ENCODE measurements at regions of chr10 and their contacts with region 1.

Region 1: GRCh38 chr10:102001435-102002068 is 54.4 kb downstream of the ARMH3 start:
- DNase-seq: peak; percentile 63
- CTCF ChIP-seq: no peak

Region 2: DNA sequence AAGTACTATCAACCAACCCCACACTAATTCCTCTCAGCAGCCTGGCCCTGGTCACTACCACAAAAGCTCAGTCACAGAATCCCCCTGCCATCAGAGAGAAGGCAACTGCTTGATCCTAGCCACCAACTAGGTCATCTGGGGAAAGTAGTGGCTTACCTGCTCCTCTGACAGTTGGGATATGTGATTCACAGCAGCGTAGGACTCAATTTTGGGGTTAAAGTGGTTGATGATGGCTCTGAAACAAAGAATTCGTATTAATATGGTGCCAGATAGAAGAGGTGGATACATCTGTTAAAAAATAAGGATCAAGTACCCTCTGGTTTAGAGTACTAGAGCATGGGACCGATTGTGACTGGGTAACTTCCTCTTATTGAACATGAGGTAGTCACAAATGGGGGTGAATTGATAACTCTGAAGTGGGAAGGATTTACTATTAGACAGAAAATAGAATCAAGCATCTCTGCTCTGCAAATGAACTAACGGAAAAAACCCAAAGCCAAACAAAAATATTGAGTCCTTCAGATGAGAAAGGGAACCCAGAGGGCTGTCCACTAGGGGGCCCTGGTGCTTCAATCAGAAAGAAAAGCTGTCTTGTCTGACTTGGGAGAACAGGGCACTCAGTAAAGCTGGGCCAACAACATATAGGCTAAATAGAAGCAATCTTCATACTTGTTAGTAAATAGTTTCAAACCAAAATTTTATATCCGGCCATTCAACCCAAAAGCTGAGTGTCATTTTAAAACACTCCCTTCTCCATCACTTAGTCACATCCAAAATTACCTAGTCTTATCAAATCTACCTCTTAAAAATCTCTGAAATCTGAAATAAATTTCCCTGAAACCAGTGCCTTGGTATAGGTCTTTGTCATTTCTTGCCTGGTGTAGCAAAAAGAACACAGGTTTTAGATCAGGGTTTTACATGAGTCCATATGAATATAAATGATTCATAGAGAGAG is 112.0 kb before region 1 on chr10:
- in situ Hi-C with region 1: loop called (anchors 5 kb)
- DNase-seq: peak; percentile 68
- CTCF ChIP-seq: peak; percentile 81